GM12878 (cell line): ENCODE measurements at regions of chr18 and their contacts with region 1.

Region 1: GRCh38 chr18:58768293-58768974 is 96.2 kb upstream of the ZNF532 start:
- DNase-seq: no peak
- ATAC-seq: peak; percentile 98
- H3K4me3 ChIP-seq: no peak overlapping the region
- H3K27ac ChIP-seq: no peak overlapping the region
- H3K4me1 ChIP-seq: peaks cover 6% of the 10 kb centered on the region; the same call in 1 of the 2 replicates
- H3K27me3 ChIP-seq: no peaks in the 10 kb centered on the region; a peak in 2 of 4 replicates
- CTCF ChIP-seq: peak; percentile 80 to 93 (median 90)
- EP300 ChIP-seq: no peak
- POLR2A ChIP-seq: no peak
- RAD21 ChIP-seq: peak; percentile 81

Region 2: DNA sequence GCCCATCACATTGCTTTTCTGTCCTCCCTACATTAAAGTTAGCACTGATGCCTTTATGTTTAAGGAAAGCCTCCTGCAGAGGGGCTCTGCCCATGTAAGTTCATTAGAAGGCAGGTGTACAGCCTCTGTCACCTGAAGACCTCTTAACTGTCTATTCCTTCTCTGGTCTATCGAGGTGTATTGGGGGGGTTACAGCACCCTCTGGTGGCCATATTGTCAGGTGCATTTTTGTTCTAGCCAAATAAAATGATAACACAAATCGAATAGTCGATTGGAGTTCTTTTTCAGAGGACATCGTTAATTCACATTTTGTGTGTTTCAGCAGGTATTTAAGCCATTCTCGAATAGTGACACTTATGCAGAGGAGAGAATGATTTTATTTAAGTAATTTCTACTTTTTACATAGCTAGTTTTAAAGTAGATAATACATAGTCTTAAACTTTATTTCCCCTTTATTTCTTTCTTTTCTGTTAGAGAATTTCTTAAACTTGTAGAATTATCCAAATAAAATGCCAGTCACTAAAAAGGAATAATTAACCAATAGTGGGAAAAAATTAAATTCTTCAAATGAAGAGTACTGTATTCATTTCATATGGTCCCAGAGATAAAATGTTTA is 587.6 kb before region 1 on chr18:
- CTCF ChIA-PET with region 1: interaction called, 12 read pairs
- POLR2A ChIA-PET with region 1: no interaction called
- RAD21 ChIA-PET with region 1: interaction called, 4 read pairs
- SMC1A ChIA-PET with region 1: interaction called, 12 read pairs
- in situ Hi-C with region 1: no loop called
- intact Hi-C with region 1: loop called (anchors 10 kb)
- DNase-seq: no peak
- ATAC-seq: peak; percentile 86
- H3K4me3 ChIP-seq: no peak overlapping the region
- H3K27ac ChIP-seq: no peak overlapping the region
- H3K4me1 ChIP-seq: no peaks in the 10 kb centered on the region
- H3K27me3 ChIP-seq: no peaks in the 10 kb centered on the region
- CTCF ChIP-seq: peak; percentile 78 to 87 (median 78)
- EP300 ChIP-seq: no peak
- POLR2A ChIP-seq: no peak
- RAD21 ChIP-seq: peak; percentile 79

Region 3: DNA sequence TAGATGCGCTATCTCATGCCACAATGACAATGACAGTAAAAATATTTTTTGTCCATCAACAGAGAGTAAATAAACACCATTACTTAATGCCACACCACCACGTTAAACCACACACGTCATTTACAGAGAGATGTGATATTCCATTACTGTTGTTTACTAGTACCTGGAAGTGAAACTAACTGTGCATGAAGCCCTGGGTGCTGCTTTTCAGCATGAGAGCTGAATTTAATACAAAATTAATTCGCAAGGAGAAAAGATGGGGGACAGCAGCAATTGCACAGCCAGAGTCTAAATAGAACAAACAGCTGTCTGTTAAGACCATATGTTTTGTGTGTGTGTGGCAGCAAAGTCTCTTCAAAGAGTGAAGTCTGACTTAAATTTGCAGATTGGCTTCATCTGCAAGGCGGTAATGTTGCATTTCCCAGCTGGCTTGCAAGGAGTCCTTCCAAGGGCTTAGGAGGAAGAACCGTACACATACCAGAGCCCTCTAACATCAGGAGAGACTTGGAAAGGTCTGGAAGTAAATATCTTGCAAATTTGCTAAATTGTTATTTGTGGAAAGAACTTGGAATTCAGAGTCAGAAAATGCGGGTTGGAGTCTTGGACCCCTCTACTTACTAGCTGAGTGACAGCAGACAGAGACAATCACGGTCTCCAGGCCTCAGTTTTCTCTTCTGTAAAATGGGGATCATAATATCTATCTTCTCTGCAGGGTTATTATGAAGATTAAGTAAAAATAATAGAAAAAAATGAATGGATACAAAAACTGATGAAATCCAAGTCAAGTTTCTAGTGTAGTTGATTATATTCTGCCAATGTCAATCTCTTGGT is 267.2 kb before region 1 on chr18:
- CTCF ChIA-PET with region 1: interaction called, 93 read pairs
- POLR2A ChIA-PET with region 1: no interaction called
- RAD21 ChIA-PET with region 1: interaction called, 38 read pairs
- SMC1A ChIA-PET with region 1: interaction called, 57 read pairs
- in situ Hi-C with region 1: no loop called
- intact Hi-C with region 1: no loop called
- DNase-seq: no peak
- ATAC-seq: peak; percentile 80
- H3K4me3 ChIP-seq: no peak overlapping the region
- H3K27ac ChIP-seq: no peak overlapping the region
- H3K4me1 ChIP-seq: peaks cover 6% of the 10 kb centered on the region
- H3K27me3 ChIP-seq: no peaks in the 10 kb centered on the region
- CTCF ChIP-seq: no peak
- EP300 ChIP-seq: peak; percentile 35 to 68; a peak in 2 of 4 replicates
- POLR2A ChIP-seq: no peak
- RAD21 ChIP-seq: no peak

Region 4: DNA sequence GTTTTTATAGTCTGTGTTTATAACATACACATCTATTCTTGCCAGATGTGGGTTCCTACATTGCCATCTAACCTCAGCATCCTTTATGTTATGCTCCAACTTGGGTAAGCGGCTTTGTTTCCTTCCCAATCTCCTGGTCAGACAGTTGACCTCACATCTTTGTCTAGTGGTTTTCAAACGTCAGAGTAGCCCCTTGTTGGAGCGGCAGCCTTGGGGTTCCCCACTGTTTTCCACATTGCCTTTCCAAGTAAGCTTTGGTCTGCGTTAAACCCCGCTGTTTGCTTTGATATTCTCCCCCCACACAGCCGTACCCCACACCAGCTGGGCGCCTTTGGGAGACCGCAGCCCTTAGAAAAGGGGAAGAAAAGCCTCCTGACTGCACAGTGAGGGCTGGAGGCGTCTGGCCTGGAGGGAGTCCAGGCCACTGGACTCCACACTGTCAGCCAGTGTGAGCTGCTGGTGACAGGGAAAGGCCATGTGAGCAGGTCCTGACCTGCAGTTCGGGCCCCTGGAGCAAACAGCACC is 13.8 kb before region 1 on chr18:
- CTCF ChIA-PET with region 1: interaction called, 40 read pairs
- POLR2A ChIA-PET with region 1: interaction called, 3 read pairs
- RAD21 ChIA-PET with region 1: interaction called, 16 read pairs
- SMC1A ChIA-PET with region 1: interaction called, 25 read pairs
- in situ Hi-C with region 1: no loop called
- intact Hi-C with region 1: no loop called
- DNase-seq: no peak
- ATAC-seq: peak; percentile 61
- H3K4me3 ChIP-seq: no peak overlapping the region
- H3K27ac ChIP-seq: no peak overlapping the region; the same call in 1 of the 2 replicates
- H3K4me1 ChIP-seq: peaks cover 8% of the 10 kb centered on the region
- H3K27me3 ChIP-seq: no peaks in the 10 kb centered on the region
- CTCF ChIP-seq: no peak
- EP300 ChIP-seq: no peak; a peak in 1 of 4 replicates
- POLR2A ChIP-seq: 0 out of 2 replicates have a peak, but pooled peaks have one; percentile 20
- RAD21 ChIP-seq: no peak

Region 5: GRCh38 chr18:59070181-59070912 is 301.9 kb after region 1 on chr18:
- CTCF ChIA-PET with region 1: interaction called, 265 read pairs
- POLR2A ChIA-PET with region 1: no interaction called
- RAD21 ChIA-PET with region 1: interaction called, 82 read pairs
- SMC1A ChIA-PET with region 1: interaction called, 71 read pairs
- in situ Hi-C with region 1: no loop called
- intact Hi-C with region 1: loop called (anchors 1 kb)
- DNase-seq: no peak
- ATAC-seq: peak; percentile 99
- H3K4me3 ChIP-seq: no peak overlapping the region
- H3K27ac ChIP-seq: no peak overlapping the region
- H3K4me1 ChIP-seq: peaks cover 7% of the 10 kb centered on the region
- H3K27me3 ChIP-seq: no peaks in the 10 kb centered on the region
- CTCF ChIP-seq: peak; percentile 81 to 91 (median 91)
- EP300 ChIP-seq: no peak
- POLR2A ChIP-seq: no peak
- RAD21 ChIP-seq: peak; percentile 84